Sciatic nerve (tissue), 2 donors: ENCODE measurements at regions of chr15 and their contacts with region 1.

Region 1: DNA sequence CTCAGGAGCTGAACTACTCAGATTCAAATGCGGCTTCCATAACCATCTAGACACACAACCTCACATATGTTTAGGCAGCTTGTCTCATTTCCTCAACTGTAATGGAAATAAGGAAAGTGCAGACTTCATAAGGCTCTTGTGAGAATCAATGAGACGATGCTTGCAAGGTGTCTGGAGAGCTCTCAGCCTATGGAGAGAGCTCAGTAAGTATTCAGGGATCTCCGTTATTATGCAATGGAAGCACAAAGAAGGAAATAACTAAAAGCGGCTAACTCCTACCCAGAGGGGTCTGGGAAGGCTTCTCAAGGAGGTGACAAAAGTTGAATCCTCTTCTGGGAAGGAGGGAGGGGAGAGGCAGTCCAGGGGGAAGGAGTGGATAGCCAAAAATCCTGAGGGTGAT is 50.1 kb upstream of the LIPC start:
- DNase-seq: no peak
- ATAC-seq: no peak

Region 2: GRCh38 chr15:58426501-58426900 is 44.8 kb after region 1 on chr15:
- intact Hi-C with region 1: loop called (anchors 1 kb)
- DNase-seq: no peak
- ATAC-seq: no peak

Region 3: DNA sequence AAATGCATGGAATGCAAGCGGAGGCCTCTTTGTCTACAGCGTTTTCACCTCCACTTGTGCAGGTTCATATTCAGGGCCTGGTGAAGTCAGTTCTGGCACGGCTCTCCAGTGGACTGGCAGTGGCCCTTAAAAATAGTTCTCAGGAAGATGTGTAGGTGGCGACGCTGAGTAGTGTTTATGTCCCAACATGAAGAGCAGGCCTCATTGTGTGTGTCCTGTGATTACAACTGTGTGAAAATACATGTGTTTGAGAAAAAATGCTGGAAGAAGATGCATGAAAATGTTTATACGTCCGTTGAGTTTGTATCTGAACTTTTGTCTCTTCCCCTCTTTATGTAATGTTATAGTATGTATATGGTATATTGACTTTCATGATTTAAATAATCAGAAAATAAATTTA is 57.3 kb after region 1 on chr15:
- intact Hi-C with region 1: no loop called
- DNase-seq: no peak
- ATAC-seq: no peak